ENCODE measurements at regions of chr11 and their contacts with region 1.

Region 1: DNA sequence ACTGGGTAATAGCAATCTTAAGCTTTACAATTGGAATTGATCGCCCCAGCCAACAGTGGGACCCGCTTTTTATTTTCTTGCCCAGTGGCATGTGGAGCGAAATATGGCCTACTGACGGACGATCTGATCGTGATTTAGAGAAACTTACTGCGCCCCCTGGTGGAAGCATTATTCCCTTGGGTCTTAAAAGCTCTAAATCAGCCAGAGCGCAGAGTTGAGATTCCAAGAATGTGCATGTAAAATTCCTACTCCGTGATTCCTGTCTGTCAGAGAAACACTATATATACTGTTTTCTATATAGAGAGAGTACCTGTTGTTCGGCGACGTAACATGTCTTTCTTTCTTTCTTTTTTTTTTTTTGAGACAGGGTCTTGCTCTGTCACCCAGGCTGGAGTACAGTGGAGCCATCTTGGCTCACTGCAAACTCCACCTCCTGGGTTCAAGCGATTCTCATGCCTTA is 3.7 kb upstream of the DPF2 start:
- DNase-seq: peak; percentile 64
- H3K4me3 ChIP-seq: no peak overlapping the region
- H3K27ac ChIP-seq: peak overlapping the region; percentile 24
- H3K4me1 ChIP-seq: peaks cover 11% of the 10 kb centered on the region
- H3K27me3 ChIP-seq: no peaks in the 10 kb centered on the region
- CTCF ChIP-seq: peak; percentile 70 to 79

Region 2: DNA sequence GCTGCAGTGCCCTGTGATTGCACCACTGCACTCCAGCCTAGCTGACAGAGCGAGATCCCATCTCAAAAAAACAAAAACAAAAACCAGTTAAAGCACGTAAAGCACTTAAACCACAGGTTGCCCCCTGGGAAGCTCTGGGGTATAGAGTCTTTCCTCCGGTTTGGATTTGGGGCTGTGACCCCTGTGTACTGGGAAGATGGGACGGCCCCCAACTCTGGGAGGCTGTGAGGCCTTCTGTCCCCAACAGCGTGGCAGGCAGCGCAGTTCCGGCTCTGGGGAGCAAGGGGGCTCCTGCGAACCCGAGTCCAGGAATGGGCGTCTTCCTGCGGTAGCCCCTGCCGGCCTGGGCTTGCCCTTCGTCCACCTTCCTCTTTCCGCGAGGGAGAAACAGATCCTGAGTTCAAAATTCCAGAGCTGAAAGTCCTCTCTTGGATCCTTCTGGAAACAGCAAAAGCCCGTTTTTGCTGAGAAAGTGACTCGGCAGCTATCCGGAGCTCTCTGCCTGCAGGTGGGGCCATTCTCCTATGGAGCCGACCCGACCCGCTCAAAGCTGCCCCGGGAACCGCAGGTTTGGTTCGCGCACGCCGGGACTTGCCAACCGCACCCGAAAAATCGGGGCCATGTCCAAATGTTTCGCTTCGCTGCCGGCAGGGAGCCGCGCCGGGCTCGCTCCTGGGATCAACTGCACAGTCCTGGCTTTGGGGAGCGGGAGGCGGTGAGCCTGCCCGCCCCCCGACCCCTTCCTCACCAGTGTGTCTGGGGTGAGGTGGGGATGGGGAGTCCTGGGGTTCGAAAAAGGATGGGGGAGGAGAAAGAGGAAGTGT is 104.5 kb before region 1 on chr11:
- CTCF ChIA-PET with region 1: interaction called, 3 read pairs
- dilution Hi-C with region 1: no loop called
- in situ Hi-C with region 1: no loop called
- intact Hi-C with region 1: loop called (anchors 1 kb)
- DNase-seq: peak; percentile 77
- H3K4me3 ChIP-seq: peak overlapping the region; percentile 39 to 46 (median 45)
- H3K27ac ChIP-seq: peak overlapping the region; percentile 45
- H3K4me1 ChIP-seq: peaks cover 19% of the 10 kb centered on the region
- H3K27me3 ChIP-seq: no peaks in the 10 kb centered on the region
- CTCF ChIP-seq: peak; percentile 21 to 62

Region 3: DNA sequence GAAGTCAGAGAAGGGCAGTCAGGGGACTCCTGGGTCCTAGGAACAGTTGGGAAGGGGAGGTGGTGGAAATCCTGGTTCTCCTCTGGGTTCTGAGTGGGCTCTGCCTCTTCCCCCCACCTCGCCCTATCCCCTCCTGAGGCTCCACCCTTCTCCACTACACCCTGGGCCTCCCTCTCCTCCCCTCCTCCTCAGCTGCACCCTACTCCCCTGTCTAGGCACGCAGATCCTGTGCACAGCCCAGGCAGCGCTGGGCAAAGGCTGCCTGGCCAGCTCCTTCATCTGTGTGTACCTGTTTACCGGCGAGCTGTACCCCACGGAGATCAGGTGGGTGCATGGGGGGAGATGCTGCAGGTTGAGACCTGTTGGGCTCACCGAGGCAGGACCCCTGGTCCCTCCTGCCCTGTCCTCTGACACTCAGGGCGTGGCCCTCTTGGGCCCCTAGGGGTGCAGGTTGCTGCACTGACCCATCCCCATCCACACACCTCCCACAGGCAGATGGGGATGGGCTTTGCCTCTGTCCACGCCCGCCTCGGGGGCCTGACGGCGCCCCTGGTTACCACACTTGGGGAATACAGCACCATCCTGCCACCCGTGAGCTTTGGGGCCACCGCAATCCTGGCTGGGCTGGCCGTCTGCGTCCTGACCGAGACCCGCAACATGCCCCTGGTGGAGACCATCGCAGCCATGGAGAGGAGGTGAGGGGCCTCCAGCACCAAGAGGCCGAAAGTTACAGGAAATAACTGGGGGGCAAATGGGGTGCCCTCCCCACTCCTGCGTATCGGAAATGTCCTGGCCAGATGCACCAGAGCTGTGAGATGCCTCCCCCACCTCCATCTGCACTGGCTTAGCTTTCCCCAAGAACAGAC is 93.5 kb before region 1 on chr11:
- CTCF ChIA-PET with region 1: interaction called, 11 read pairs
- dilution Hi-C with region 1: no loop called
- in situ Hi-C with region 1: no loop called
- intact Hi-C with region 1: no loop called
- DNase-seq: no peak
- H3K4me3 ChIP-seq: no peak overlapping the region
- H3K27ac ChIP-seq: no peak overlapping the region
- H3K4me1 ChIP-seq: no peaks in the 10 kb centered on the region
- H3K27me3 ChIP-seq: no peaks in the 10 kb centered on the region
- CTCF ChIP-seq: no peak

Region 4: DNA sequence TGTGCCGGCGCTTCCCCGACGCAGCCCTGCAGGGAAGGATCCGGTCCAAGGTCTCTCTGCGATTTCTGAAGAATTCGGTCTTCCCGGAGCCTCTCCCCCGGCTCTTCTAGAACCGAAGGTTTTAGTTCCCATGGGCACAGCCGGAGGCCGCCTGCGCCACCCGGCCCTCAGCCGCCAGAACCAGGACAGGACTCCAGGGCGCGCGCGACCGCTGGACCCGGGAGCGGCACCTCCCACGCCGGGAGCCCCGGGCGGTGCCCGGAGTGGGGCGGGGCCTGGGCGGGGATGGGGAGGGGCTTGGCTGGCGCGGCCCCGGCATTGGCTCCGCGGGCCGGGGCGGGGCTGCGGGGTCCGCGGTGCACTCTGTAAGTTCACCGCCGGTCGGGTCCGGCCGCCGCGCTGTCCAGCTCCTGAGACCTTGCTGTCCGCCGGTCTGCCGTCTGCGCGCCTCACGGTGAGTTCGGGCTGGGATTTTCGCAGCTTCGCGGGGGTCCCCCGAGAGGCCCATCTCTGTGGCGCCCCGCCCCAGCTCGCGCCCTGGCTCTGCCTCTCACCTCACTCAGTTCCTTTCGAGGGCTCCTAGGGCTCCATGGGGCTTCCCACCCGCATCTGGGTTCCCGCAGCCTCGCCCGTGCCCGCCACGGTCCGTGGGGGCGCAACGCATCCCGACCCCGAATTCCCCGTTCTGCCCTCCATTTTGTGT is 15.3 kb before region 1 on chr11 and contains the start of gene CDC42EP2:
- CTCF ChIA-PET with region 1: interaction called, 3 read pairs
- dilution Hi-C with region 1: no loop called
- in situ Hi-C with region 1: no loop called
- intact Hi-C with region 1: loop called (anchors 2 kb)
- DNase-seq: peak; percentile 82
- H3K4me3 ChIP-seq: peak within 1 kb of the TSS; percentile 77 to 91 (median 88)
- H3K27ac ChIP-seq: peak within 1 kb of the TSS; percentile 46
- H3K4me1 ChIP-seq: peaks cover 13% of the 10 kb centered on the region
- H3K27me3 ChIP-seq: no peaks in the 10 kb centered on the region
- CTCF ChIP-seq: no peak
- total RNA-seq, gene CDC42EP2: 6.8 to 24.8 TPM

Region 5: GRCh38 chr11:65386307-65387081 is 56.5 kb after region 1 on chr11 and contains the start of gene FRMD8:
- CTCF ChIA-PET with region 1: no interaction called
- dilution Hi-C with region 1: no loop called
- in situ Hi-C with region 1: no loop called
- intact Hi-C with region 1: no loop called
- DNase-seq: peak; percentile 81
- H3K4me3 ChIP-seq: peak within 1 kb of the TSS; percentile 75 to 96 (median 84)
- H3K27ac ChIP-seq: peak within 1 kb of the TSS; percentile 78
- H3K4me1 ChIP-seq: peaks cover 80% of the 10 kb centered on the region
- H3K27me3 ChIP-seq: no peaks in the 10 kb centered on the region
- CTCF ChIP-seq: no peak
- total RNA-seq, gene FRMD8: 43.4 to 74.8 TPM

Region 6: GRCh38 chr11:65954771-65955170 is 624.8 kb after region 1 on chr11:
- CTCF ChIA-PET with region 1: interaction called, 16 read pairs
- dilution Hi-C with region 1: no loop called
- in situ Hi-C with region 1: no loop called
- intact Hi-C with region 1: no loop called
- DNase-seq: peak; percentile 40
- H3K4me3 ChIP-seq: no peak overlapping the region
- H3K27ac ChIP-seq: no peak overlapping the region
- H3K4me1 ChIP-seq: peaks cover 5% of the 10 kb centered on the region
- H3K27me3 ChIP-seq: no peaks in the 10 kb centered on the region
- CTCF ChIP-seq: no peak